Endothelial cell of umbilical vein (primary cell): ENCODE measurements at regions of chr10 and their contacts with region 1.

Region 1: DNA sequence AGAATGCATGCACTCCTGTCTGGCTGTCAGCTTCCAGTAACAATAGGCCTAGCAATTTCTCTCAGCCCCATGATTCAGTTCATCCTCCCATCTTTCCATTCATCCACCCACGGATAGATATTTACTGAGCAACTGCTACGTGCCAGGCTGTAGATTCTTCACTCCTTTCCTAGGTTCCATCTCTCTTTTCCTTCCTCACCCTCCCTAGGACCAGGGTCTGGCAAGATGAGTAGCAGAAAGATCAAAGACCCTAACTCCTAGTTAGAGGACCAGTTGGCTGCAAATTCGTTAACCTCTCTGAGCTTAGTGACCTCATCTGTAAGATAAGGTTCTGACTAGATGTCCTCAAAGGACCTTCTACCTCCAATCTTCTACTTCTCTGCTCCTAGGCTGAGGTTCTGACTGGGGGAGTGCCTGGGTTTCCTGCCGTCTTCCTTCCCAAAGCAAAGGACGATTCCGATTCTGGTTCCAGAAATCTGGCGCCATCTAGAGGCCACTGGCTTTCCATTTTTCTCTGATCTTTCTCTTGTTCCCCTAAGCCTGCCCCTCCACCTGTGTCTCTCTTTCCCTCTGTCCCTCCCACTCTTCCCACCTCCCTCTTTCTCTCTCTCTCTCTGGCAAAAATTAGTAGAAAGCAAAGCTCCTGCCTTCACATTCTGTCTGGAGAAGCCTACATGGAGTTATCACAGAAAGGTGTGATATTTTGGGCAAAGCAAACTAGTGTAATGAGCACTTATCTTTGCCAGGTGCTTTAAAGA is 26.2 kb downstream of the TBATA start:
- DNase-seq: peak; percentile 52
- H3K4me3 ChIP-seq: no peak overlapping the region
- H3K27ac ChIP-seq: no peak overlapping the region
- H3K4me1 ChIP-seq: no peaks in the 10 kb centered on the region
- H3K27me3 ChIP-seq: peaks cover 0 to 6% of the 10 kb centered on the region in 2 experiments
- CTCF ChIP-seq: peak; percentile 71 to 74
- POLR2A ChIP-seq: no peak

Region 2: DNA sequence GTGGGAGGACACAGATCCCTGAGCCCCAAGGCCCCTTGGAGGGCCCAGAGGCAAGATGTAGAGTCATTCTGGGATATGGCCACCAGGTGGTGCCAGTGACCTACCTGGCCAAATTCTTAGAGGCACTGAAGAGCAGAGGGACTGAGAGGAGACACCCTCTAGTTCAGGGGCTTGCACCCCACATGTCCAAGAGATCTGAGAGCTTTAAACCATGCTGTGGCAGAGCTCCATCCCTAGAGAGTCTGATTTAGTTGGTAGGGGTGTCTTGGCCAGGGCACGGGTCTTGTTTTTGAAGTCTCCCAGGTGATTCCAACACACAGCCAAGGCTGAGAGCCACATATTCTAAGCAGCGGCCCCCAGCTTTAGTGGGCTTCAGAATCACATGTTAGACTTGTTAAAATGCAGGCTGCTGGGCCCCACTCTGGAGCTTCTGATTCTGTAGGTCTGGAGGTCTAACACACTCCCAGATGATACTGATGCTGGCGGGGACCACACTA is 208.9 kb before region 1 on chr10:
- CTCF ChIA-PET with region 1: interaction called, 18 read pairs
- POLR2A ChIA-PET with region 1: no interaction called
- dilution Hi-C with region 1: no loop called
- intact Hi-C with region 1: loop called (anchors 1 kb)
- DNase-seq: peak; percentile 59
- H3K4me3 ChIP-seq: no peak overlapping the region
- H3K27ac ChIP-seq: no peak overlapping the region
- H3K4me1 ChIP-seq: no peaks in the 10 kb centered on the region
- H3K27me3 ChIP-seq: no peaks in the 10 kb centered on the region
- CTCF ChIP-seq: peak; percentile 76 to 84
- POLR2A ChIP-seq: no peak

Region 3: DNA sequence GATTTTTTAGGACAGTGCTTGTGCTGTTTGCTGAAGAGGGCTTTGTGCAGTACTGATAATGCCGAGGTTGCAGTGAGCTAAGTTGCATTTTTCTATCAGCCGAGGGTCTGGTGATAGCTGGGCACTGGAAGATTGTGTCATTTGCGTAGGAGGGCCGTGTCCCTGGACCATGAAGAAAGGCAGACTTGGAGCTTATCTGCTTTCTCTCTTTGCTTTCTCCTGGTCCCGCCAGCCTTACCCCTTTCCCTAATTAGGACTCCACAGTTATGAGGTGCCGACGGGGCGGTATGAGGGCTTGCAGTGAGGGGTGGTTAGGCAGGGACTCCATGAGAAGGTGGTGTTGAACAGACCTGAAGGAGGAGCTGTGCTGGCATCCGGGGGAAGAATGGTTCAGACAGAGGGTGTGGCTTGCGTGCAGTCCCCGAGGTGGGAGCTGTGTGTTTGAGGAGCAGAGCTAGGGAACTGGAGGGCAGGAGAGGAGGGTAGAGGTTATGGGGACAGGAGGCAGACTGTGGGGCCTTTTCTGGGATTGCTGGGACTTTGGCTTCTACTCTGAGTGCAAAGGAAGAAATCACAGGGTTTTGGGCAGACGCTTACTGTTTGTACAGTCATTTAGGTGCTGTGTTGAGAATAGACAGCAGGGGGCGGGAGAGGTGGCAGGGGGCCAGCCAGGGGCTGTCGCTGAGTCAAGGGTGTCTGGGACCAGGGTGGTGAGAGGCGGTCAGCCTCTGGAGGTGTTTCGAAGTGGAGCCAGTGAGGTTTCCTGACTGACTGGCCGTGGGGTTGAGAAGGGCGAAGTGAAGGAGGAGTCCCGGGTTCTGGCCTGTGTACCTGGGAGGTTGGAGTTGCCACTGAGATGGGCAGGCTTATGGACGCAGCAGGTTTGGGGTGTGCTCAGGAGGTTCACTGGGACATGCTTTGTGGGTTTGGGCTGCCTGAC is 199.8 kb before region 1 on chr10:
- CTCF ChIA-PET with region 1: interaction called, 8 read pairs
- POLR2A ChIA-PET with region 1: no interaction called
- dilution Hi-C with region 1: no loop called
- intact Hi-C with region 1: loop called (anchors 2 kb)
- DNase-seq: peak; percentile 19
- H3K4me3 ChIP-seq: no peak overlapping the region
- H3K27ac ChIP-seq: no peak overlapping the region
- H3K4me1 ChIP-seq: no peaks in the 10 kb centered on the region
- H3K27me3 ChIP-seq: no peaks in the 10 kb centered on the region
- CTCF ChIP-seq: peak; percentile 26 to 38
- POLR2A ChIP-seq: no peak

Region 4: DNA sequence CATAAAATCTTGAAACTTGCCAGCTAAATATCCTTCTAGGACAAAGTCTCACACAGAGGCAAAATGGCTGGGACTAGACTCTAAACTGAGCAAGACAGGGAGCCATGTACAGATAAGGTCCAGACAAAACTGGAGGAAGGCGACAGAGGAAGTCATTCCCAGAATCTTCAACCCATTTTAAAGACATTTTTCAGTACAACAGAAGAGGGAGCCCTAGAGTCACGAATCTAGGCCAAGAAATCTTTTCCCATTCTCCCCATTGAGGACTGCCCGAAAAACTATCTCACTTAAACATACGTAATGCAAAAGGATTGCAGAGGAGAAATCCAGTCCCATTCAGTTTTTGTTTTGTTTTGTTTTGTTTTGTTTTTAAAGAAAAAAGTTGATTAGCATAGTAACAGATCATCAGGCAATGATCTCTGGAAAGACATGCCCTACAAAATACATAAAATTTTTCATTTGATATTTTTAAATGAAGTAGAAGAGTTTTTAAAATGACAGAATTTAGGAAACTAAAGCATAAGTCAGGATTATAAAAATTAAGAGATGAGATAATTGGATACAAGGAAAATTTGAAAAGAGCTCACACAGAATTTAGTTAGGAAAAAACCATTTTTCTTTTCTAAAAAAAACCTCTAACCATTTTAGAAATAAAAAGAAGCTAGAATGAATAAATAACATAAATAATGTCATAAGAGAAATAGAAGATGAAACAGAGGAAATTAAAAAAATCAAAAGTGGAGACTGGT is 139.5 kb before region 1 on chr10:
- CTCF ChIA-PET with region 1: interaction called, 3 read pairs
- POLR2A ChIA-PET with region 1: no interaction called
- dilution Hi-C with region 1: no loop called
- intact Hi-C with region 1: loop called (anchors 1 kb)
- DNase-seq: no peak
- H3K4me3 ChIP-seq: no peak overlapping the region
- H3K27ac ChIP-seq: no peak overlapping the region
- H3K4me1 ChIP-seq: no peaks in the 10 kb centered on the region
- H3K27me3 ChIP-seq: peaks cover 12 to 13% of the 10 kb centered on the region in 2 experiments
- CTCF ChIP-seq: peak in 1 of 2 donors; percentile 22
- POLR2A ChIP-seq: no peak

Region 5: DNA sequence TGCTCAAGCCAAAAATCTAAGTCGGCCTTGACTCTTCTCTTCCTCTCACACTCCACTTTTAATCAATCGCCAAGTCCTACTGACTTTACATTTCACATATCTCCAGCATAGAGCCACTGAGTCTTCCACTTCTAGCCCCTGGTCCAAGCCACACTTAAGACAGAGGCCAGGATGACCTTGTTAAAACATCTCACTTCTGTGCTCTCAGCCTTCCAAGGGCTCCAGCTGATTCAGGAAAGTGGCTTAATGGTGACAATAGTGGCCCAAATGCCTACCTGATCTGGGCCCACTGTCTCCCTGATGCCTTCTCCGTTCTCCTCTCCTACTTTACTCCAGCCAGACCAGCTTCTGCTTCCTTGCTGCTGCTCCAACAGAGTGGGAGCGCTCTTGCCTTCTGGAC is 21.8 kb after region 1 on chr10:
- CTCF ChIA-PET with region 1: no interaction called
- POLR2A ChIA-PET with region 1: no interaction called
- dilution Hi-C with region 1: no loop called
- intact Hi-C with region 1: no loop called
- DNase-seq: no peak
- H3K4me3 ChIP-seq: no peak overlapping the region
- H3K27ac ChIP-seq: no peak overlapping the region
- H3K4me1 ChIP-seq: no peaks in the 10 kb centered on the region
- H3K27me3 ChIP-seq: peaks cover 8 to 16% of the 10 kb centered on the region in 2 experiments
- CTCF ChIP-seq: no peak
- POLR2A ChIP-seq: no peak

Region 6: GRCh38 chr10:70880077-70880534 is 121.2 kb after region 1 on chr10:
- CTCF ChIA-PET with region 1: interaction called, 5 read pairs
- POLR2A ChIA-PET with region 1: no interaction called
- dilution Hi-C with region 1: no loop called
- intact Hi-C with region 1: loop called (anchors 1 kb)
- DNase-seq: peak; percentile 82
- H3K4me3 ChIP-seq: no peak overlapping the region
- H3K27ac ChIP-seq: no peak overlapping the region
- H3K4me1 ChIP-seq: no peaks in the 10 kb centered on the region
- H3K27me3 ChIP-seq: no peaks in the 10 kb centered on the region
- CTCF ChIP-seq: peak; percentile 80 to 85
- POLR2A ChIP-seq: no peak